HepG2 (cell line): ENCODE measurements at regions of chr1 and their contacts with region 1.

Region 1: GRCh38 chr1:8423650-8424538 is 106.0 kb downstream of the SLC45A1 start:
- DNase-seq: peak; percentile 71
- ATAC-seq: peak; percentile 82
- H3K4me3 ChIP-seq: peak overlapping the region; percentile 81 to 91 (median 85)
- H3K27ac ChIP-seq: peak overlapping the region; percentile 88
- H3K4me1 ChIP-seq: peaks cover 57% of the 10 kb centered on the region
- H3K27me3 ChIP-seq: no peaks in the 10 kb centered on the region
- CTCF ChIP-seq: no peak
- EP300 ChIP-seq: no peak
- POLR2A ChIP-seq: peak; percentile 36 to 43; a peak in 2 of 4 replicates
- RAD21 ChIP-seq: 0 out of 2 replicates have a peak, but pooled peaks have one; percentile 34

Region 2: DNA sequence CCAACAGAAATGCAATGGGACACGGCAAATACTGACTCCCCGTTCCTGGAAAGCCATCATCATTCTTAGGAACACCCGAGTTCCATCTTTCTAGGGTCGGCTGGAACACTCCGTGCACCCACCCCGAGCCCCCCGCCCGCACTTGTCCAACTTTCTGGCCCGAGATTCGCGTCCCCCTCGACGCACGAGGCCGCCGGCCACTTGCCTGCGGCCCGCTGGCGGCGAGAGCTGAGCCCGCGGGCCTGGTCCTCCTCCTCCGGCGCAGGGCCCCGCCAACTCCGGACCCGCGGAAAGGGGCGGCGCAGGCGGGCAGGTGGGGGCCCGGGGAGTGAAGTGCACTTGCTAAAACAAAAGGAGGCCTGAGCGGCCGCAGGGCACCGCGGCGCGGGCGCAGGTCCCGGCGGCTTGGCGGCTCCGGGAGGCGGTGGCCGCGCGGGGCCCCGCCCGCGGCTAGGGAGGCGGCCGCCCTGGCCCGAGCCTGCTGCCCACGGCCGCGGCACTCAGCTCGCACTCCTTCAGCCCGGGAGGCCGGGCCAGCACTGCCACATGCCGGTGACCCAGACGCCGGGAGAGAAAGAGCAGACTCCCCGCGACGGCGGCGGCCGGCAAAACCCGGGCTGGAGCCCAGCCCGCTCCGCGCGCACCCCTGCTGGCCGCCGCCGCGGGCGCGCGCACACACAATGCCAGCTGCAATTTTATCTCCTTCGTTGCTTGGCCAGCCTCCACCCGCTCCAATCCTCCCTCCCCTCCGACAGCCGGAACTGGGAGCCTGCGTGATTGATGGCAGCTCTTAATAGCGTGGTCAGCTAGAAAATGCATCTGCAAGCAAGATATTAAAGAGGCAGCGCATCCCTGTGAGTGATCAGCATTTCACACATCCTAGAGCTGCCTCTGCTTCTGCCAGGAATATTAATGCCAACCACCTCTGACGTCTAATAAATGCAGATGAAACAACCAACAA is 279.2 kb after region 1 on chr1:
- CTCF ChIA-PET with region 1: no interaction called
- POLR2A ChIA-PET with region 1: interaction called, 3 read pairs
- in situ Hi-C with region 1: no loop called
- intact Hi-C with region 1: loop called (anchors 5 kb)
- DNase-seq: peak; percentile 83
- ATAC-seq: peak; percentile 94
- H3K4me3 ChIP-seq: peak overlapping the region; percentile 76 to 89 (median 86)
- H3K27ac ChIP-seq: peak overlapping the region; percentile 83
- H3K4me1 ChIP-seq: peaks cover 74% of the 10 kb centered on the region
- H3K27me3 ChIP-seq: no peaks in the 10 kb centered on the region; a peak in 1 of 5 replicates
- CTCF ChIP-seq: peak; percentile 58
- EP300 ChIP-seq: peak in 1 of 2 experiments; percentile 56; a peak in 3 of 4 replicates
- POLR2A ChIP-seq: peak; percentile 80 to 82
- RAD21 ChIP-seq: peak; percentile 84